ENCODE measurements at regions of chr19 and their contacts with region 1.

Region 1: GRCh38 chr19:46076951-46077816 is 36.4 kb upstream of the IGFL4 start:
- DNase-seq: peak; percentile 63 to 85
- H3K4me3 ChIP-seq: peak overlapping the region; percentile 49 to 75 (median 74)
- H3K27ac ChIP-seq: no peak overlapping the region
- H3K4me1 ChIP-seq: peaks cover 0 to 3% (median 1%) of the 10 kb centered on the region in 4 experiments; a peak in 2 of 7 replicates
- H3K27me3 ChIP-seq: peaks cover 2 to 17% (median 11%) of the 10 kb centered on the region in 4 experiments
- CTCF ChIP-seq: peak; percentile 85 to 100 (median 97)
- EP300 ChIP-seq: no peak
- POLR2A ChIP-seq: no peak
- RAD21 ChIP-seq: peak; percentile 94 to 97

Region 2: DNA sequence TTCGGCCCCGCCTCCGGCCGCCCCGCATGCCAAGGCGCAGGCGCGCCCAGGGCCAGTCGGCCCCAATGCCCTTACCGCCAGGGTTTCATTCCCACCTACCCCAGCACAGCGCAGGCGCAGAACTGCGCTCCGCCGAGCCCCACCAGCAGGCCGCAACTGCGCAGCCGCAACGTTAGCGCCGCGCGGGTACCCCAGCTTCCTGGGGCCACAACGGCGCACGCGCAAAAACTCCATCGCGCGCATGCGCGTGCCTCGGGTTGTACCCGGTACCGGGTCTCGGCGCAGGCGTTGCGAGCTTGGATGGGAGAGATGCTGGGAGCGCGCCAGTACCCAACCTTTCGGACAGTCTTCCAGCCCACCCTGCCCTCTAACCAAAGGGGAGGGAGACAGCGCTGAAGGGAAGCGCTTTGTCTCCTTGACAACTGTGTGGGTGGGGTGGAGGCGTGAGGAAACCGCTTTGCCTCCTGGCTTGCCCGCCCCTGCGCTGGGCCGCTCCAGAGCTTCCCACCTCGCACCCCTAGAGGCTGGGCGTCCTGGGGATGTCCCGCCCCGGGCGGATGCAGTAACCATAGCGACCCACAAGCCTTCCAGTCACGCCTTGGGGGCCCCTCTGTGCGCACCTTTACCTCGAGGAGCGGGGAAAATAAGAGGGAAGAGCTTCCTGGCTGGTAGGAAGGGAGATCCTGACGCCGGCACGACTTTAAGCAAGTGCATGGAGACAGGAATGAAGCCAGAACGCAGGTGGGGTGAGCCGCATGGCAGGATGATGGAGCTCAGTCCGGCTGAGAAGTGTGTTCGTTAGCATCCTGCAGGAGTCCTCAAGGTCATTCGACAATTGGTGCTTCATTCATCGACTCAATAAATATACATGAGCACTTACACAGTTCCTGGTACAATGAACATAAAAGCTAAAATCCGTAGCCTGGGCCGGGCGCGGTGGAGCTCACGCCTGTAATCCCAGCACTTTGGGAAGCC is 174.2 kb before region 1 on chr19:
- CTCF ChIA-PET with region 1: interaction called, 12 read pairs
- POLR2A ChIA-PET with region 1: no interaction called
- DNase-seq: peak; percentile 95 to 100
- H3K4me3 ChIP-seq: peak overlapping the region; percentile 48 to 76 (median 72)
- H3K27ac ChIP-seq: peak overlapping the region; percentile 43; the same call in 1 of the 2 replicates
- H3K4me1 ChIP-seq: peaks cover 0 to 2% (median under 1%) of the 10 kb centered on the region in 4 experiments; a peak in 3 of 7 replicates
- H3K27me3 ChIP-seq: peaks cover 0 to 16% (median 11%) of the 10 kb centered on the region in 4 experiments; a peak in 6 of 7 replicates
- CTCF ChIP-seq: no peak
- EP300 ChIP-seq: no peak
- POLR2A ChIP-seq: no peak; a peak in 1 of 3 replicates
- RAD21 ChIP-seq: no peak

Region 3: DNA sequence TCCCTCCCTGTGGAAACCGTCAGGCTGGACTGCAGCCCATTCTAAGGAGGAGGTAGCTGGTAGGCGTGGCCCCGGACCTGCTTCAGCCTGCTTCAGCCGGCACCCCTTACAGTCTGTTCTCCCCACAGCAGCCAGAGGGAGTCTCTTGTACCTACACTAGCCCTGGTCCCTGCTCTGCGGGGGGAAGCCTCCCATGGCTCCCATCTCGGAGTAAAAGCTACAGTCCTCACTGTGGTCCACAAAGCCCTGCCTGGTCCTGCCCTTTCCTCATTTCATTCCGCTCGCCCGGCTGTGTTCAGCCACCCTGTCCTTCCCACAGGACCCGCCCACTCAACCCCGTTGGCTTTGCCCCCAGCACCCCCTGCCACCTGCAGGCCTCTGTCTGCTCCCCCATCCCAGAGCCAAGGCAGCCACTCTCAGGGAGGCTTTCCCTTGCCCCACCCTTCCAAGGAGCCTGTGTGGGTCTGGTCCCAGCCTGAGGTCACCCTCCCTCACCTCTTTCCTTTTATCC is 55.6 kb before region 1 on chr19:
- CTCF ChIA-PET with region 1: interaction called, 250 read pairs
- POLR2A ChIA-PET with region 1: interaction called, 4 read pairs
- DNase-seq: no peak
- H3K4me3 ChIP-seq: no peak overlapping the region
- H3K27ac ChIP-seq: no peak overlapping the region
- H3K4me1 ChIP-seq: peaks cover 0 to 14% (median 8%) of the 10 kb centered on the region in 4 experiments; a peak in 6 of 7 replicates
- H3K27me3 ChIP-seq: peaks cover 0 to 2% (median 0%) of the 10 kb centered on the region in 4 experiments; a peak in 2 of 7 replicates
- CTCF ChIP-seq: peak; percentile 20 to 43 (median 39)
- EP300 ChIP-seq: no peak
- POLR2A ChIP-seq: no peak
- RAD21 ChIP-seq: no peak

Region 4: GRCh38 chr19:46049597-46049996 is 27.6 kb before region 1 on chr19:
- CTCF ChIA-PET with region 1: interaction called, 31 read pairs
- POLR2A ChIA-PET with region 1: no interaction called
- DNase-seq: peak; percentile 27 to 81
- H3K4me3 ChIP-seq: peak overlapping the region in 1 of 4 experiments; percentile 17; a peak in 1 of 8 replicates
- H3K27ac ChIP-seq: no peak overlapping the region
- H3K4me1 ChIP-seq: no peaks in the 10 kb centered on the region
- H3K27me3 ChIP-seq: no peaks in the 10 kb centered on the region; a peak in 2 of 7 replicates
- CTCF ChIP-seq: peak; percentile 77 to 89 (median 82)
- EP300 ChIP-seq: no peak
- POLR2A ChIP-seq: no peak
- RAD21 ChIP-seq: peak; percentile 27 to 57

Region 5: GRCh38 chr19:46101293-46101692 is 24.1 kb after region 1 on chr19:
- CTCF ChIA-PET with region 1: interaction called, 15 read pairs
- POLR2A ChIA-PET with region 1: no interaction called
- DNase-seq: no peak
- H3K4me3 ChIP-seq: no peak overlapping the region
- H3K27ac ChIP-seq: no peak overlapping the region
- H3K4me1 ChIP-seq: peaks cover 0 to 5% (median 0%) of the 10 kb centered on the region in 4 experiments; a peak in 1 of 7 replicates
- H3K27me3 ChIP-seq: no peaks in the 10 kb centered on the region
- CTCF ChIP-seq: peak in 2 of 3 experiments; percentile 2 to 20; a peak in 3 of 4 replicates
- EP300 ChIP-seq: no peak
- POLR2A ChIP-seq: no peak
- RAD21 ChIP-seq: peak in 1 of 2 experiments; percentile 29; a peak in 1 of 4 replicates

Region 6: DNA sequence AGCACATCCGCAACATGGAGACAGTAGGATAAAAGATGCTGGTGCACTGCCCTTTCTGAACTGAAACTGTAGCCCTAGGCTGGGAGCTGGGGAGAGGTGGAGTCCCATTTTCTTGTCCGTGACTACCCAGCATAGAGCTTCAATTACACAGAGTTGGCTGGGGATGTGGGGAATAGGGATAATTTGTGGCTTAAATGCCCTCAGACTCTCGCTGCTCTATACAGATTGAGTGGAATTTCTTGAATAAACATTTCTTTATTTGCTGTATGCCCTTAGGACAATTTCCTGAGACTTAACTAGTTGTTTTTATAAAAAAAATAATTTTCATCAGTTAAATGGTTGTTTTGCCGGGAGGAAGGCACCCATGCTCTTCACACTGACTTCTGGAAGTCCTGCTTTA is 78.0 kb after region 1 on chr19:
- CTCF ChIA-PET with region 1: no interaction called
- POLR2A ChIA-PET with region 1: no interaction called
- DNase-seq: no peak
- H3K4me3 ChIP-seq: no peak overlapping the region
- H3K27ac ChIP-seq: no peak overlapping the region
- H3K4me1 ChIP-seq: no peaks in the 10 kb centered on the region
- H3K27me3 ChIP-seq: no peaks in the 10 kb centered on the region
- CTCF ChIP-seq: no peak
- EP300 ChIP-seq: no peak
- POLR2A ChIP-seq: no peak
- RAD21 ChIP-seq: no peak

Region 7: DNA sequence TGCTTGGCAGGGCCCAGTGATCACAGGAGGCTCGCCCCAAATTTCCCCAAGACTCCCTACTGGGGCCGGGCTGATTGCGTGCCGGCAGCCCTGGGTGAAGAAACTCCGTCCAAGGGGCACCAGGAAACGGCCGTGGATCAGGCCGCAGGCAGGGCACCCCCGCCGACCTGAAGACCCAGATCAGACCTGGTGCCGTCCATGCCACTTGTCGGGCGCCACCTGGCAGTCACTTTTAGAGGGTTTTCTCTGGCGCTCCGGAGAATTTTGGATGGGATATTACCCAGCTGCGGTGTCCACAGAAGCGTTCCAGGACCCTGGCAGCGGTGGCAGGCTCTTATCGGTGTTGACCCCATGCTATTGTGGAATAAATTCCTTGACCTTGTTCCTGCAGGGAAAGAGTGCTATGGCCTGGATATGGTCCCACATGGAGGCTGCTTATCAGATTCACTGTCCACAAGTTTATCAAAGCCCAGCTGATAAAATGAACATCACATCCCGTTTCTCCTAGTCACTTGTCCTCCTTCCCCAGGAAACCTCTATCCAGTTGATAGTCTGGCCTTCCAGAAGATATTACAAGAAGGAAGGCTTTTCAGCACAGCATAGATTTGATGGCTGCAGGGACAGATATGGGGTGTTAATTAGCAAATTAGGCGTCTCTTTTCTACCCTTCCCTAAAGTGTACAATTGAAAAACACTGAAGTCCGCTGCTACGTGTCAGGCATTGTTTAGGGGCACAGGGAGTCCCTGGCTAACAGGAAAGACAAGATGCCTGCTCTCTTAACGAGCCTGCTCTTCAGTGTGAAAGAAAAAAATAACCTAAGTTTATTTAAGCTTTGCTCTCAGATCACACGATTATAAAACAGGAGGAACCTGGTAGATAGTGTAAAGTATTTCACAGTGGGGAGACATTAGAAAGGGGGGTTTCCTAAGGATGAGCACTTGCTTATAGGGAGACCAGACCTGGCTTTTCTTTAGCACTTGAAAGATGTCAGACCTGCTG is 109.2 kb after region 1 on chr19:
- CTCF ChIA-PET with region 1: interaction called, 143 read pairs
- POLR2A ChIA-PET with region 1: interaction called, 3 read pairs
- DNase-seq: no peak
- H3K4me3 ChIP-seq: no peak overlapping the region
- H3K27ac ChIP-seq: no peak overlapping the region
- H3K4me1 ChIP-seq: no peaks in the 10 kb centered on the region
- H3K27me3 ChIP-seq: no peaks in the 10 kb centered on the region
- CTCF ChIP-seq: 0 out of 4 replicates have a peak, but pooled peaks of 1 of the 3 experiments have one; percentile 19
- EP300 ChIP-seq: no peak
- POLR2A ChIP-seq: no peak
- RAD21 ChIP-seq: peak in 1 of 2 experiments; percentile 32; a peak in 1 of 4 replicates

Region 8: DNA sequence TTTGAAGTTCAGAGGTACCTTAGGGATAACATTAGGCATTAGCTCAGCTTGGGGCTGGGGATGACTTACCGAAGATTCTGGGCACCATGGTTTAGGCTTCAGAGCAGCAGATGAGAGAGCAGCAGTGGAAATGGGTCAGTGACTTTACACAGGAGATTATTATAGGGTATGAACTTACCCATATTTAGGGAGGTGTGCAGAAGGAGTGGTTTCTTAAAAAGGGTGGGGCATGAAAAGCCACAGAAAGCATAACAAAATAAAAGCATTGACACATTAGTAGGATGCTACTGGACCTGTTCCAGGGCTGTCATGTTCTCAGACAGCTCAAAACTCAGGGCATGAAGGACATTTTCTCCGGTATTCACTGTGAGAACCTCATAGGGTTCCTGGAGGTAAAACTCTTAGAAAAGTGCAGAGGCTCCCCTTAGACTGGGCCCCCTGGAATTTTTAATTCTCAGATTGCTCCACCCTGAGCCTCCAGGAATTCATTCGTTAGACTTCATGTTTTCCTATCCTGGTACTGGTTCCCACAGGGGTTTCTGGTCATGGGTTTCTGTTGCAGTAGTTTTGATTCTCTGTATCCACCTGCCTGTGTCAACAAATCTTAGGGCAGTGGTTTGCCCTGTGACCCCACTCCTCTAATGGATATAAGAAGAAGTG is 173.0 kb after region 1 on chr19:
- CTCF ChIA-PET with region 1: interaction called, 365 read pairs
- POLR2A ChIA-PET with region 1: no interaction called
- DNase-seq: no peak
- H3K4me3 ChIP-seq: no peak overlapping the region
- H3K27ac ChIP-seq: no peak overlapping the region
- H3K4me1 ChIP-seq: no peaks in the 10 kb centered on the region
- H3K27me3 ChIP-seq: no peaks in the 10 kb centered on the region
- CTCF ChIP-seq: no peak
- EP300 ChIP-seq: no peak
- POLR2A ChIP-seq: no peak
- RAD21 ChIP-seq: no peak

Measured in H1 (cell line).